ENCODE measurements at regions of chr17 and their contacts with region 1.

Region 1: DNA sequence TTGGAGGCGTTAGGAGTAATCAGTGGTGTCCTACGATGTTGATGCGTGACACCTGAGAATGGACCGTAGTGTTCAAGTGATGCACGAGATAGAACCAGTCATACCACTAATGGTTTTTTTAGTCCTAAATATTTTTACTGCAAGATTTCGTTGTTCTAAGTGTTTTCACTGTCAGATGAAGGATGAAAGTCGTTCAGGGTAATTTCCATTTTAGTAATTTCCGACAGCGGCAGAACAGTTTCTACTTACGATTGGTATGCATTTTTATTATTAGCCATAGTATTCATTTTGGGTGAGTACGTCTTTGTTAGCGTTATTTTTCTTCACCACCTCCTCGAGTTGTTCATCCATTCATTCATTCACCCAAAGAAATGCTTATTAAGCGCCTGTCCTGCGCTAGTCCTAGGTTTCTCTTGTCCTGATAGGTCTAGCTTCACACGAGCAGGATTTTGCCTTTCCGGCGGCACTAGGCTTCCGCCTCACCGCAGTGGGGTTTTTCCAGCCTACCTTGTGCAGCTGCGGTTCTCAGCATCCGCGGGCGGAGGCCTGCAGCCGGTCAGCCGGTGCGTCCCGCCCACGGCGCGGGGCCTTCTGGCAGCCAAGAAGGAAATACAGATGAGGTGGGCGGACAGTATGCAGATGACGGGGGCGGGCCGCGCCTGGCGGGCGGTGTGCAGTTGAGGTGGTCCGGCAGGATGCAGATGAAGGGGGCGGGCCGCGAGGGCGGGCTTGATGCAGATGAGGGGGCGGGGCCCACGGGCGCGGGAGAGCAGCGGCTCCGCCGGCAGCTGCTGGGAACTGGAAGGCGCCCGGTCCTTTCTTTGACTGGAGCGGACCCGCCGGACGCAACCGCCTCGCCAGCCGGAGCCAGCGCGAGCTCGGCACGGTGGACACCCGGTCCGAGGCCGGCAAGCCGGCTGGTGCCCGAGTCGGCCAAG is 146.4 kb downstream of the SPECC1 start:
- DNase-seq: peak; percentile 96
- H3K4me3 Mint-ChIP-seq: no peak overlapping the region
- H3K27ac Mint-ChIP-seq: peak overlapping the region; percentile 21
- H3K4me1 Mint-ChIP-seq: peaks cover 7% of the 10 kb centered on the region
- H3K27me3 Mint-ChIP-seq: no peaks in the 10 kb centered on the region
- CTCF ChIP-seq: no peak

Region 2: DNA sequence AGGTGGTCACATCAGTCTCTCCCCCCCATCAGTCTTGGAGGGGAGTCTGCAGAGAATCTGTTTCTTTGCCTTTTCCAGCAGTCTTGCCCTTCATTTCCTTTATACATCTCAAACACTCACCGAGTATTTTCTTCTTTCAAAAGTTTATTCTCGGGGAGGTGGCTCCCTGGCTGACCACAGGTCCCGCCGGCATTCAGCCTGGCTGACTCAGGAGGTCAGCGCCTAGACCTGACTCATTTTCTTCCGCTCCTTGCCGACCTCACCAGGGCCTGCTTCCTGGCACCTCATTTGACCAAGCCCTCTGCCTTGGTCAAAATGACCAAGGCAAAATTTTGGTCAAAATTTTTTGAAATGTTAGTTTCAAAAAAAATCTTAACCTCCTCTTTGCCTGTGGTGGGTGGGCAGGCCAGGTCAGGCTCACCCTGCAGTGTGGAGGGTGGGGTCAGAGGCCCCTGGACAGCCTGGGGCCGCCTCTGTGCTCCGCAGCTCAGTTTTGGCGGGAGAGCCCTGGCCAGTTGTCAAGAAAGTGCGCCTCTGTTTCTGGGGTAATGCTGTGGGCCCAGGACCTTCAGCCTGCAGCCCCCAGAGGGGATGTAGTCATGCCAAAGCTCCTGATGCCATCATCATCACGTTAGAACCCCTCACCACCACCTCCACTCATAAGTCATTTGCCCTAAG is 19.2 kb after region 1 on chr17:
- CTCF ChIA-PET with region 1: no interaction called
- POLR2A ChIA-PET with region 1: interaction called, 26 read pairs
- intact Hi-C with region 1: no loop called
- DNase-seq: peak; percentile 72
- H3K4me3 Mint-ChIP-seq: peak overlapping the region; percentile 63
- H3K27ac Mint-ChIP-seq: peak overlapping the region; percentile 97
- H3K4me1 Mint-ChIP-seq: peaks cover 33% of the 10 kb centered on the region
- H3K27me3 Mint-ChIP-seq: no peaks in the 10 kb centered on the region
- CTCF ChIP-seq: no peak

Region 3: DNA sequence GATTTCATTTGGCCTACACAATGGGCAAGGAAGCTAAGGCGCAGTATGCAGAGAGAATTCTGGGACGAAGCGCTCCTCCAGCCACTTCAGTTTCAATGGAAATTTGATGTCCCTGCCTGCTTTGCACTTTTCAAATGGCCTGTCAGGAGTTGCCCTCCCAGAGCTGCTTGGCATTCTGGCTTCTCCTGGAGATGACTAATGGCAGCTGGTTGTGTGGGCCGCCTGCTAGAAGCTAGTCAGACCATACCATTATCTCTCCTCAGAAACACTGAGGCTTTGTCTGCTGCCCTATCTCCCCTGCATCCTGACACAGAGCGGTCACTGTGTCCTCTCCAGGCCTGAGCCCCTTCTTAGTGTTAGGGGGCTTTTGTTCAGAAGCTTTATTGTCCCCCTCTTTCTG is 33.8 kb after region 1 on chr17:
- CTCF ChIA-PET with region 1: no interaction called
- POLR2A ChIA-PET with region 1: interaction called, 38 read pairs
- intact Hi-C with region 1: loop called (anchors 2 kb)
- DNase-seq: peak; percentile 71
- H3K4me3 Mint-ChIP-seq: no peak overlapping the region
- H3K27ac Mint-ChIP-seq: peak overlapping the region; percentile 57
- H3K4me1 Mint-ChIP-seq: peaks cover 39% of the 10 kb centered on the region
- H3K27me3 Mint-ChIP-seq: no peaks in the 10 kb centered on the region
- CTCF ChIP-seq: no peak

Region 4: DNA sequence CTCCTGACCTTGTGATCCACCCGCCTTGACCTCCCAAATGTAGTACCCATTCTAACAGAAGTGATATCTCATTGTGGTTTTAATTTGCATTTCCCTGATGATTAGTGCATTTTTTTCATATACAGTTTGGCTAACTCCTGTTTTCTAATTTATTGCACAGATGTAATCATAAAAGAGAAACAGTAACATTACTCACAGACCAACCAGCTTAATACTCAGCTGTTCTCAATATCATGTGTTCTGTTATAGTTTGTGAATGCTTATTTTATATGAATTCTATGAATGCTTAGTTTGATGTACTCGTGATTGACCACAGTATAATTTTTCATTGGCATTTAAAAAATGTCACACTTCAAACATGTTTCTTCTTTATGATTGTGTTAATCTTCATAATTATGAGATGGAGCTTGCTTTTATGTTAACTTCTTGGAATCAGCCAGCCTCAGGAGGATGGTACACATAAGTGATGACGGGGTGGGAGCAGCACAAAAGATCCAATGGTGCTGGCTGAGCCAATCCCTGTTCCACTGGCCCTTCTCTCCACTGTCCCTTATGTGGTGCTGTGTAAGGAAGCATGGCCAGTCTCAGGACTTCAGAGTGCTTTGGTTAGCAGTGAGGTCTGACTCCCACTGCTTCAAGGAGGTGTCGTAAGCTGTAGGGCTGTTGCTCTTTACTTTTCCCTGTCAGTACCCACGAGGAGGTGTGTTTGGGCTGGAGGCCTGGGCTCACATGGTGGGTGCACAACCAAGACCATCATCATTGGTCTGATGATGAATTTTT is 44.7 kb after region 1 on chr17:
- CTCF ChIA-PET with region 1: interaction called, 3 read pairs
- POLR2A ChIA-PET with region 1: interaction called, 44 read pairs
- intact Hi-C with region 1: loop called (anchors 5 kb)
- DNase-seq: no peak
- H3K4me3 Mint-ChIP-seq: no peak overlapping the region
- H3K27ac Mint-ChIP-seq: no peak overlapping the region
- H3K4me1 Mint-ChIP-seq: peaks cover 24% of the 10 kb centered on the region
- H3K27me3 Mint-ChIP-seq: no peaks in the 10 kb centered on the region
- CTCF ChIP-seq: no peak

Region 5: DNA sequence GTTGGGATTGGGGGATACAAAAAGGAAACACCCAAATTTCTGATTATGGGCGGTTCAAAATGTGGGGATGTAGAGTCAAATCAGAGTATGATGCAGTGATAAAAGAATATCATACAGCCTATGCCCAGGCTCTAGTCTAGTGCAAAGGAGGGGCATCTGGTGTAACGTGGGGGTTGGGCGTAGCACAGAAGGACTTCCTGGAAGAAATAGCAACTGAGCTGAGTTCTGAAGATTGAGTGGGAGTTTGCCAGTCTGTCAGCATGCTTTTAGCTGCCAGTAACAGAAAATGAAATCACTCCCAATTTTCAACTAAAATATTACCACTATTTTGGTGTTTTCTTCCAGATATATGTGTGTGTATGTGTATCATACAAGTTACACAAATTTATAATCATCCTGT is 50.5 kb after region 1 on chr17:
- CTCF ChIA-PET with region 1: interaction called, 5 read pairs
- POLR2A ChIA-PET with region 1: interaction called, 44 read pairs
- intact Hi-C with region 1: loop called (anchors 5 kb)
- DNase-seq: peak; percentile 52
- H3K4me3 Mint-ChIP-seq: peak overlapping the region; percentile 11
- H3K27ac Mint-ChIP-seq: peak overlapping the region; percentile 81
- H3K4me1 Mint-ChIP-seq: peaks cover 36% of the 10 kb centered on the region
- H3K27me3 Mint-ChIP-seq: no peaks in the 10 kb centered on the region
- CTCF ChIP-seq: no peak

Measured in MCF 10A (cell line).